ENCODE measurements at regions of chr1 and their contacts with region 1.

Region 1: GRCh38 chr1:207868774-207869721 is 41.9 kb downstream of the CD34 start:
- DNase-seq: peak; percentile 66 to 82 (median 78)
- H3K4me3 ChIP-seq: peak overlapping the region in 1 of 2 donors; percentile 79
- H3K4me3 Mint-ChIP-seq: peak overlapping the region; percentile 91 to 98 (median 96)
- H3K27ac ChIP-seq: peak overlapping the region; percentile 81
- H3K27ac Mint-ChIP-seq: peak overlapping the region; percentile 68 to 98 (median 94)
- H3K4me1 ChIP-seq: peaks cover 87% of the 10 kb centered on the region
- H3K4me1 Mint-ChIP-seq: peaks cover 74 to 94% (median 80%) of the 10 kb centered on the region in 4 donors
- H3K27me3 ChIP-seq: no peaks in the 10 kb centered on the region
- H3K27me3 Mint-ChIP-seq: no peaks in the 10 kb centered on the region

Region 2: GRCh38 chr1:207751790-207752455 is 117.1 kb before region 1 on chr1 and contains the start of gene CD46:
- CTCF ChIA-PET with region 1: interaction called, 8 read pairs
- POLR2A ChIA-PET with region 1: interaction called, 4 read pairs
- intact Hi-C with region 1: loop called (anchors 5 kb)
- DNase-seq: peak; percentile 91 to 95 (median 92)
- H3K4me3 ChIP-seq: peak within 1 kb of the TSS; percentile 74 to 96
- H3K4me3 Mint-ChIP-seq: peak within 1 kb of the TSS; percentile 96 to 100 (median 100)
- H3K27ac ChIP-seq: peak within 1 kb of the TSS; percentile 79
- H3K27ac Mint-ChIP-seq: peak within 1 kb of the TSS; percentile 92 to 99 (median 98)
- H3K4me1 ChIP-seq: peaks cover 69% of the 10 kb centered on the region
- H3K4me1 Mint-ChIP-seq: peaks cover 54 to 86% (median 66%) of the 10 kb centered on the region in 4 donors
- H3K27me3 ChIP-seq: no peaks in the 10 kb centered on the region
- H3K27me3 Mint-ChIP-seq: no peaks in the 10 kb centered on the region
- total RNA-seq, gene CD46: 217 to 234 TPM

Region 3: DNA sequence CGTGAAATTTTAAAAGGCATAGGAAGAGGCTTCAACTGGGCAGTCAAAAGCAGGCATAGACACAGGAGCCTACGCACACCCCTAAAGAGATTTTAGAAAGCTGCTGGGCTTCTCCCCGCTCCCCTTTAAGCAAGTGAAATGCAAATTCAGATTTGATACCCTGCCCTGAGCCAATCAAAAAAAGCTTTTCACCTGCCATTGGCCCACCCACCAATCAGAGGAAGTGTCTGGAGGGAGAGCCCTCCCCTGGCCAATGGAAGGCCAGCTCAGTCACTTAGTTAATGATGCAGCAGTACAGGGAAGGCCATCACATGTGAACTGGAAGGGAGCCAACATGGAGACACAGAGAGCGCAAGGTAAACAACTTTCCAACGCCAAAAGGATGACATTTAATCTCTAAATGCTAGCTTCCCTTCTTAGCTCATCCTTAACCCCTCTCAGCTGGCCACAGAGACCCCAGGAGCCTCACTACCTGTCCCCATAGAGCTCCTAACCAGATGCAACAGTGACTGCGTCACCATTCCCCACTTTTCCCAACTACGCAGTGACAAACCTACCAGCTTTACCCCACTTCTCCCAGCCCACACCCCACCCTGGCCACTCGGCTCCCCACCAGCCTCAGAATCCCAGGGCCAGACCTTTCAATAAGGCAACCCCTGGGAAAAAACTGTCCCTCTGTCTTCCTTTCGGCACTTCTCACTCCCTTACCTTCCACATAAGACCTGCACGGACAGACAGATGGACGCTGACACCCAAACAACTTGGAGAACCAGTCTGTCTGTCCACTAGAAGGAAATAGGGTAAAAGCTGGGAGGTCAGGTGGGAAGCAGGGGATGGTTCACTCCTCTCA is 46.2 kb before region 1 on chr1:
- CTCF ChIA-PET with region 1: interaction called, 494 read pairs
- POLR2A ChIA-PET with region 1: interaction called, 374 read pairs
- intact Hi-C with region 1: loop called (anchors 1 kb)
- DNase-seq: peak; percentile 74 to 85 (median 77)
- H3K4me3 ChIP-seq: peak overlapping the region; percentile 56 to 85
- H3K4me3 Mint-ChIP-seq: peak overlapping the region; percentile 84 to 98 (median 94)
- H3K27ac ChIP-seq: peak overlapping the region; percentile 86
- H3K27ac Mint-ChIP-seq: peak overlapping the region; percentile 95 to 100 (median 99)
- H3K4me1 ChIP-seq: peaks cover 87% of the 10 kb centered on the region
- H3K4me1 Mint-ChIP-seq: peaks cover 61 to 94% (median 79%) of the 10 kb centered on the region in 4 donors
- H3K27me3 ChIP-seq: no peaks in the 10 kb centered on the region
- H3K27me3 Mint-ChIP-seq: peaks cover 2 to 4% of the 10 kb centered on the region in 2 donors

Region 4: DNA sequence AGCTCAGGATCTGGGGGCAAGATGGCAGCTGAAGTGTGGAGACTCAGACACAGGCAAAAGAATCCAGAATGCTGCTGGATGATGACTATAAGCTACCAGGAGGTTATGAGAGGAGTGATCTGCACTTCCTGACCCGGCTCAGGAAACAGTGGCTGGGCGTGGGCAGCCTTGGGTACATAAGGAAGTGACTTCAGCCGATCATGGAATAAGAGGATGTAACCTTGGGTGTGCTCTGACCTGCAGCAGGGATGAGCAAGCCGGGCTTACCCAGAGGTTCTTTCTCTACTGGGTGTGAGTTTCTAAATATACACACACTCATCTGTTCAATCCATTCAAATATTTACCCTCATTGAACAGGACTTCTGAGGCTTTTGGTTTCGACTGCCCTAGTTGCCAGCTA is 20.8 kb before region 1 on chr1:
- CTCF ChIA-PET with region 1: interaction called, 19 read pairs
- POLR2A ChIA-PET with region 1: interaction called, 18 read pairs
- intact Hi-C with region 1: loop called (anchors 2 kb)
- DNase-seq: no peak
- H3K4me3 ChIP-seq: no peak overlapping the region
- H3K4me3 Mint-ChIP-seq: peak overlapping the region in 7 of 8 donors; percentile 33 to 80 (median 71)
- H3K27ac ChIP-seq: no peak overlapping the region
- H3K27ac Mint-ChIP-seq: peak overlapping the region; percentile 8 to 89 (median 72)
- H3K4me1 ChIP-seq: peaks cover 77% of the 10 kb centered on the region
- H3K4me1 Mint-ChIP-seq: peaks cover 74 to 98% (median 87%) of the 10 kb centered on the region in 4 donors
- H3K27me3 ChIP-seq: no peaks in the 10 kb centered on the region
- H3K27me3 Mint-ChIP-seq: no peaks in the 10 kb centered on the region

Region 5: DNA sequence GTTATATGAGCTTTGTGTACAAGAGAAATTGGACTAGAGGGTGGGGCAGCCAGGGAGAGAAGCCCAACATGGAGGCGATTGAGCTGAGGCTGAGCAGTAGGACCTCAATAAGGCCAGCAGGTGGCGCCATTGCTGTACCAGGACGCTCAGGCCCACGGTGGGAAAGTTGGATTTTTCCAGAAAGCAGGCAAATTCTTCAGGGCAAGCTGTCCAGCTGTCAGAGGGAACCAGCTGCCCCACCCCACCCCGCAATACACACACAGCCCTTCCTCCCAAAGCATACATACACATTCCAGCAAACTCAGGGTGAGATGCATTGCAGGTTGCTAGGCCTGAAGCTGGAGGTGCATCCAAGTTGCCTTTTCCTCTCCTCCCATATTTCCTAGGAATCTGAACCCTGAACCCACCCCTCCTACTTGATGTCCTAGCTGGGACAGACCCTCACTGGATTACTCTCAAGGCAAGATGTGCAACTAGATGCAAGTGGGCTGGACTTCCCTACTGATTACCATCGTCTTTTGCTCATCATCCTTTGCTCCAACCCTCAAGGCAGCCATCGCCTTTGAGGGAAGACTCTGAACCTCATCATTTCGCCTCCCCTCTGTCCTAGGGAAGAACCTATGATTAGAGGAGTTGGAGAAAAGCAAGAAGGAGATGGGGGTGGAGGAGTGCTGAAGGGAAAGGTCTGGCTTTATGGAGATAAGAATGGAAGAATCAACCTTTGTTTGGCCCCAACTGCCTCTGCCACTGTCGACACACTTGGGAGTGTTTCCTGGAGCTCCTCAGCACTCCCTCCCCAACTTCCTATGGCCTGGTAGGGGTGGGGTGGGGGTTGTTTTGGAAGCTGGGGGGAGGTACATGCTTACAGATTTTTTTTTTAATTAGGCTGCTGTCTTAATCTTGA is 16.3 kb after region 1 on chr1:
- CTCF ChIA-PET with region 1: interaction called, 402 read pairs
- POLR2A ChIA-PET with region 1: interaction called, 157 read pairs
- intact Hi-C with region 1: loop called (anchors 1 kb)
- DNase-seq: peak; percentile 67 to 72 (median 69)
- H3K4me3 ChIP-seq: no peak overlapping the region
- H3K4me3 Mint-ChIP-seq: peak overlapping the region in 4 of 8 donors; percentile 13 to 58 (median 26)
- H3K27ac ChIP-seq: no peak overlapping the region
- H3K27ac Mint-ChIP-seq: peak overlapping the region in 6 of 7 donors; percentile 71 to 98 (median 78)
- H3K4me1 ChIP-seq: peaks cover 32% of the 10 kb centered on the region
- H3K4me1 Mint-ChIP-seq: peaks cover 25 to 39% (median 34%) of the 10 kb centered on the region in 4 donors
- H3K27me3 ChIP-seq: no peaks in the 10 kb centered on the region
- H3K27me3 Mint-ChIP-seq: peaks cover 1 to 14% of the 10 kb centered on the region in 2 donors

Region 6: GRCh38 chr1:208357644-208358507 is 488.8 kb after region 1 on chr1:
- CTCF ChIA-PET with region 1: no interaction called
- POLR2A ChIA-PET with region 1: no interaction called
- intact Hi-C with region 1: no loop called
- DNase-seq: no peak
- H3K4me3 ChIP-seq: no peak overlapping the region
- H3K4me3 Mint-ChIP-seq: no peak overlapping the region
- H3K27ac ChIP-seq: no peak overlapping the region
- H3K27ac Mint-ChIP-seq: no peak overlapping the region
- H3K4me1 ChIP-seq: no peaks in the 10 kb centered on the region
- H3K4me1 Mint-ChIP-seq: no peaks in the 10 kb centered on the region
- H3K27me3 ChIP-seq: no peaks in the 10 kb centered on the region
- H3K27me3 Mint-ChIP-seq: peaks cover 3 to 6% of the 10 kb centered on the region in 2 donors

Region 7: DNA sequence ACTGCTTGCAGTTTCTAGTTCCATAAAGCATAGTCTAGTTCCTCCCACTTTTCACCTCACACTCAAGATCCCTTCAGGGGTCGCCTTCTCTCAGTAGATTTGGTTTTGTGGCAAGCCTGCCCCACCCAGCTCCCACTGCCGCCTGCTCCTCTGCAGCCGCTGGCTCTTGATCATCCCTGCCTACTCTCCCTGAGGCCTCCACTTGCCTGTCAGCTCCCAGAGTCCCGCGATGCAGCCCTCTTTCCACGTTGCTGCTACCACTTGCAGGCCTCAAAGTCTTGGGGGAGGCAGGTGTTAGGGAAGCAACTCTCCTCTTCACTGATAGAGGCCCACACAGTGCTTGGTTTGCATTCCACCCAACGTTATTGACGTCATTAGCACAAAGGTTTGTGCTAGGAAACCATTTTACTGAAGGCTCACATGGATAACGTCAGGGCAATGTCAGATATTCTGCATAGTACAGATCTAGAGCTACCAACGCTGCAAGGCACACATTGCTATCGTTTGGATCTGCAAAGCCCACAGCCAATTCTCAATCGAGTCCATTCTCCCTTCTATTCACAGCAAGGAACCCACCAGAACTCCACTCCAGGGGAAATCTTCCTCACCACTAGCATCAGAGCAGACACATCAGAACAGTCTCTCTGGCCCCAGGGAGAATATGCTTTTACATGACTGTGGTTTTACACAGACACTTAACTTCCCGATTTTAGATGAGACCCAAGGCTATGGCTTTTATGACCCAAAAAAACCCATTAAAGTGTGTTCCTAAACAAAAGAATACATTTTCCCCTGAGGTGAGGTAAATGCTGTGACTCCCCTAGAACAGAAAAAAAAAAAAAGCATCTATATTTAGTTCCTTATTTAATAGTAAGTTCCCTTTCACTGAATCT is 1195.0 kb after region 1 on chr1:
- CTCF ChIA-PET with region 1: no interaction called
- POLR2A ChIA-PET with region 1: no interaction called
- intact Hi-C with region 1: no loop called
- DNase-seq: no peak
- H3K4me3 ChIP-seq: no peak overlapping the region
- H3K4me3 Mint-ChIP-seq: no peak overlapping the region
- H3K27ac ChIP-seq: no peak overlapping the region
- H3K27ac Mint-ChIP-seq: no peak overlapping the region
- H3K4me1 ChIP-seq: no peaks in the 10 kb centered on the region
- H3K4me1 Mint-ChIP-seq: no peaks in the 10 kb centered on the region
- H3K27me3 ChIP-seq: no peaks in the 10 kb centered on the region
- H3K27me3 Mint-ChIP-seq: peaks cover 0 to 5% of the 10 kb centered on the region in 2 donors

Measured in CD4-positive, alpha-beta memory T cell (primary cell).